MCF 10A (cell line): ENCODE measurements at regions of chr20 and their contacts with region 1.

Region 1: GRCh38 chr20:40970201-40970600 is 58.4 kb upstream of the TOP1 start:
- DNase-seq: no peak
- H3K4me3 Mint-ChIP-seq: no peak overlapping the region
- H3K27ac Mint-ChIP-seq: no peak overlapping the region
- H3K4me1 Mint-ChIP-seq: peaks cover 14% of the 10 kb centered on the region
- H3K27me3 Mint-ChIP-seq: no peaks in the 10 kb centered on the region
- CTCF ChIP-seq: no peak

Region 2: DNA sequence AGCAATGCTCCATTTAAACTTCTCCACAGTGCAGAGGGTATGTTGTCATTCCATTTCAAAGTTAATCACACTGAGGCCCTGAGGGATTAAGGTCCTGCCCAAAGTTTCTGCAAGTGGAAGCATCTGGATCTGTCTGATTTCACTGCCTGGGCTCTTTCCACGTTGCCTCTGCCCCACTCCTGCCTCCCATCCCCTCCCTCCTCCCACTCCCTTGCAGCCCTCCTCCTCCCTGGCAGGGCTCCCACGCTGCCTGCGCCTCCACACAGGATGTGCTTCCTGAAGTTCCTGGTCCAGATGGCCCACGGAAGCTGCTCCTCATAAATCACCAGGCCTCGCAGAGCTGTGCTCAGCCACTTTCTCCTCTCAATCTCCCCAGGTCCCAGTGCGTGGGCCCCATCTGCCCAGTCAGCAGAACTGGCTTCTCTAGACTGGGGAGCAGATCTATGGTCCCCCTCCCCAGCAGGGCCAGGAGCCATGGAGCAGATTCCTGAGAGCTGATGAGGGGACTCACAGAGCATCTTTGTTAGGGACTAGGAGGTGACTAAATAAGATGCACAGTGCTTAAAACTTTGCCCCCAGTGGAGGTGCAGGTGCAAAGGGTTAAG is 215.8 kb before region 1 on chr20:
- CTCF ChIA-PET with region 1: no interaction called
- POLR2A ChIA-PET with region 1: no interaction called
- intact Hi-C with region 1: no loop called
- DNase-seq: no peak
- H3K4me3 Mint-ChIP-seq: no peak overlapping the region
- H3K27ac Mint-ChIP-seq: no peak overlapping the region
- H3K4me1 Mint-ChIP-seq: peaks cover 11% of the 10 kb centered on the region
- H3K27me3 Mint-ChIP-seq: no peaks in the 10 kb centered on the region
- CTCF ChIP-seq: no peak

Region 3: GRCh38 chr20:41017390-41018042 is 47.3 kb after region 1 on chr20:
- CTCF ChIA-PET with region 1: interaction called, 10 read pairs
- POLR2A ChIA-PET with region 1: no interaction called
- intact Hi-C with region 1: no loop called
- DNase-seq: no peak
- H3K4me3 Mint-ChIP-seq: no peak overlapping the region
- H3K27ac Mint-ChIP-seq: no peak overlapping the region
- H3K4me1 Mint-ChIP-seq: peaks cover 18% of the 10 kb centered on the region
- H3K27me3 Mint-ChIP-seq: no peaks in the 10 kb centered on the region
- CTCF ChIP-seq: no peak

Region 4: DNA sequence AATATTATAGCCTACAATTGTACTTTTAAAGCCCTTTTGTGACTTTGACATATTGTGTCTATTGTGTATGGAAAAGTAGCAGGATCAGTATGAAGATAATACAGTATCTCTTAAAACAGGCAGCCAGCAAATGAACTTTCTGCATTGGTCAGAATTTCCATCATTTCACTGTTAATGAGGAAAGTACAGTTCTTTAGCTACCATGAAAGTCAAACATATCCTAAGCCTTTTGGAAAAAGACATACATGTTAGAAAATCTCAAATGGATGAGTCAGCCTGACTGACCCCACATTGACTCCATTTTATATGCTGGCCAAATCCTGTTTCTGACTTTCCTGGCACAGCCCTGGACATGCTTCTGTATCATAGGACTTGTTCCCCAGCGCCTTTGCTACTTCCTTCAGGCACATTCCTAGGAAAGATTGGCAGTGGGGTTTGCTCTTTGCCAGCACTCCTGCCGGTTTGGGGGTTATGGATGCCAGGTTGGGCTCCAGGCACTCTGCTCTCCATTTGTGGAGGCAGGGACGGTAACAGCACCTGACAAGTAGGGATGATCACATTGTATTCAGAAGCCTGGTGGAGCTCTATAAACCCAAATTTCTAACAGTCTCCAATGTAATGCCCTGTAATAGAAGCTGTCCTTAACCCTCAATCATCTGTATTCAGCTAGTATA is 102.1 kb after region 1 on chr20:
- CTCF ChIA-PET with region 1: interaction called, 24 read pairs
- POLR2A ChIA-PET with region 1: no interaction called
- intact Hi-C with region 1: no loop called
- DNase-seq: peak; percentile 82
- H3K4me3 Mint-ChIP-seq: no peak overlapping the region
- H3K27ac Mint-ChIP-seq: peak overlapping the region; percentile 43
- H3K4me1 Mint-ChIP-seq: peaks cover 27% of the 10 kb centered on the region
- H3K27me3 Mint-ChIP-seq: no peaks in the 10 kb centered on the region
- CTCF ChIP-seq: no peak

Region 5: GRCh38 chr20:41086402-41087338 is 116.5 kb after region 1 on chr20:
- CTCF ChIA-PET with region 1: interaction called, 176 read pairs
- POLR2A ChIA-PET with region 1: no interaction called
- intact Hi-C with region 1: no loop called
- DNase-seq: no peak
- H3K4me3 Mint-ChIP-seq: no peak overlapping the region
- H3K27ac Mint-ChIP-seq: peak overlapping the region; percentile 74
- H3K4me1 Mint-ChIP-seq: peaks cover 5% of the 10 kb centered on the region
- H3K27me3 Mint-ChIP-seq: no peaks in the 10 kb centered on the region
- CTCF ChIP-seq: no peak

Region 6: DNA sequence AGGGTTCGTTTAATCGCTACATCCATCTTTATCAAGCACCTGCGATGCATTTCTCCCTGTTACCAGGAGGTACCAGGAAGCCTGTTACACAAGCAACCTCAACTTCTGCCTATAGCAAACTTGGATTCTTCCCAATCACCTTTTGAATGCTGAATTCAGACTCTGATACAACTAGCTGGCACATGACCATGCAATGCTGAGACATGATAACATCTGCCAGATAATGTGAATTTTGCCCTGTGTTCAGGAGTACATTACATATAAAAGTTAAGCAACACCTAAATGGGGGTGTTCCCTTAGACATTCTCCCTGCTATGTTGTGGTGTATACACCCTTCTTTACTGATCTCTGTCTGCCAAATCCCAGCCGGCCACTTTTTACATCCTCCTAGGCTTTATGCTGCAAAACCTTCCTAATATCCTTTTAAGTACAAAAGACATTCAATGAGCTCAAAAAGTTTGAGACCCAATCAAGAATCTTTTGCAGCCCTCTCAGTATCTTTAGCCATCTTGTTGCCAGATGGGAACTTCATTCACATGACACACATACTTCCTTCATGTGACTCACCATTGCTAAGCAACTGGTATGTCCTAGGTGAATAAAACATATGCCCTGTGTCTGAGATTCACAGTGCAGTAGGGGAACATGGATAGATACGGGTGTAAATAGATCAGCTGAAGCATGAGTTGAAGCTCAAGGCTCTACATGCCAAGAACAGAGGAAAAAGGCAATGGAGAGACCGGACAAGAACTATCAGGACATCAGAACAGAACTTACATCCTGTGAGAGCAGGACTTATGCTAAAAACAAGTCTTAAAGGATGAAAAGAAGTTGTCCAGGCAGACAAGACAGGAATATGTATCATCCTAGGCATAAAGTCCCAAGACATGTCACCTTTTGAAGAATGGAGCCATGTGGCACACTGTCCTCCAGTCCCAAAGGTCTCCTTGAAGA is 263.0 kb after region 1 on chr20:
- CTCF ChIA-PET with region 1: interaction called, 10 read pairs
- POLR2A ChIA-PET with region 1: no interaction called
- intact Hi-C with region 1: loop called (anchors 1 kb)
- DNase-seq: peak; percentile 73
- H3K4me3 Mint-ChIP-seq: peak overlapping the region; percentile 52
- H3K27ac Mint-ChIP-seq: peak overlapping the region; percentile 97
- H3K4me1 Mint-ChIP-seq: peaks cover 33% of the 10 kb centered on the region
- H3K27me3 Mint-ChIP-seq: no peaks in the 10 kb centered on the region
- CTCF ChIP-seq: no peak

Region 7: GRCh38 chr20:41261790-41262717 is 291.9 kb after region 1 on chr20:
- CTCF ChIA-PET with region 1: no interaction called
- POLR2A ChIA-PET with region 1: no interaction called
- intact Hi-C with region 1: no loop called
- DNase-seq: peak; percentile 45
- H3K4me3 Mint-ChIP-seq: no peak overlapping the region
- H3K27ac Mint-ChIP-seq: no peak overlapping the region
- H3K4me1 Mint-ChIP-seq: no peaks in the 10 kb centered on the region
- H3K27me3 Mint-ChIP-seq: no peaks in the 10 kb centered on the region
- CTCF ChIP-seq: no peak